Motor neuron (in vitro differentiated cells): ENCODE measurements at regions of chr6 and their contacts with region 1.

Region 1: GRCh38 chr6:168314948-168315347 is 4.6 kb downstream of the DACT2 start:
- ATAC-seq: peak in 5 of 8 experiments; percentile 15 to 50 (median 30)
- H3K4me3 ChIP-seq: no peak overlapping the region
- H3K27ac ChIP-seq: no peak overlapping the region
- H3K4me1 ChIP-seq: peaks cover 67 to 75% of the 10 kb centered on the region in 2 donors

Region 2: DNA sequence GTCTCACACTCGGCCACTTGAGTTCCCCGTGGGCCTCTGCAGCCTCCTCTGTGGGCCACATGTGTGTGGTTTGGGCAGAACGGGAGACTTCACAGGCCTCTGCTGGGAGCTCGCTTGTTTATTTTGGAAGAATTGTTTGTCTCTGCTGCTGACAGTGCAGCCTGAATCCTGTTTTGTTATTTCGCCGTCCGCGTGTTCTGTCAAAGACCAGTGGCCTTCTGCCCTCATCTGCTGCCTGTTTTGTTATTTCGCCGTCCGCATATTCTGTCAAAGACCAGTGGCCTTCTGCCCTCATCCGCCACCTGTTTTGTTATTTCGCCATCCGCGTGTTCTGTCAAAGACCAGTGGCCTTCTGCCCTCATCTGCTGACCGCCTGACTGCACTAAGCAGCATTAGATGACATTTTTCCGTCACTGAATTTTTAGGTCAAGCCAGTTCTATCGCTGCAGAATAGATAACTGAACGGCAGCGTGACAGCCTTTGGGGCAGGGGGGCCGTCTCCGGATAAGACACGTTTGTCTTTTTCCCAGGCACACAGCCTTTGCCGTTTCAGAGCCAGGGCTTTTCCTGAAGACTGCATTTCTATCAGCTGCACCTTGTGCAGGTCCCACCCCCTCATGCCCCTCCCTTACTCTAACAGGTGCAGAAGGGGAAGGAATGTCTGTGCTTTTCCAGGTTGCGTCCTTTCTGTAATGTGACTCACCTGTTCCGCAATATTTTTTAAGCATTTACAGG is 646.8 kb before region 1 on chr6:
- in situ Hi-C with region 1: no loop called
- ATAC-seq: peak in 5 of 8 experiments; percentile 45 to 63 (median 50)
- H3K4me3 ChIP-seq: no peak overlapping the region
- H3K27ac ChIP-seq: peak overlapping the region in 1 of 2 donors; percentile 83
- H3K4me1 ChIP-seq: peaks cover 54 to 75% of the 10 kb centered on the region in 2 donors

Region 3: DNA sequence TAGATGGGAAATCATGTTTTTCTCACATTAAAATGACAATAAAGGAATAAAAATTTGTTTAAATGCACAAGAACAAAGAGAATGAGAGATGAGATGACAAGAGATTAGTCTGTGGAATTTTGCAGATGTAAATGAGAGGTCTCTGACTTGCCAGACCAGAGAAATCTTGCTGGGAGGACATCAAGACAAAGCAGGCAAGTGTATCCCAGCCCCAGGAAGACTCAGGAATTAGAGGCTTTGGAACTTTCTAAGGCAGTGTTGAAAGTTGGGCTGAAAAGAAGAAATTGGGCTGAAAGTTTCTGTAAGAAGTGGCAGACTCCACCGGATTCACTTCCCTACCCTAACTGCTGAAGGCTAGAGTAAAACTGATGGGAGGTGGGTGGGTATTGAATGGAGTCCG is 433.6 kb before region 1 on chr6:
- in situ Hi-C with region 1: no loop called
- ATAC-seq: no peak
- H3K4me3 ChIP-seq: no peak overlapping the region
- H3K27ac ChIP-seq: no peak overlapping the region
- H3K4me1 ChIP-seq: no peaks in the 10 kb centered on the region

Region 4: GRCh38 chr6:168201383-168201782 is 113.6 kb before region 1 on chr6:
- in situ Hi-C with region 1: loop called in 1 of 9 experiments (anchors 25 kb)
- ATAC-seq: peak in 2 of 8 experiments; percentile 18 to 42
- H3K4me3 ChIP-seq: no peak overlapping the region
- H3K27ac ChIP-seq: no peak overlapping the region
- H3K4me1 ChIP-seq: peaks cover 6 to 7% of the 10 kb centered on the region in 2 donors